Activated T-helper 1 cell treated with anti-CD3 and anti-CD28 coated beads, Interleukin-12 subunit alpha, Interleukin-12 subunit beta, Interleukin-2, Interleukin-4 antibody, amounts not matched to agents 30 ng/mL and 10 ng/mL and 1 ng/mL, durations not matched to agents 14 hours and 24 hours and 36 hours (primary cell): ENCODE measurements at regions of chr19 and their contacts with region 1.

Region 1: DNA sequence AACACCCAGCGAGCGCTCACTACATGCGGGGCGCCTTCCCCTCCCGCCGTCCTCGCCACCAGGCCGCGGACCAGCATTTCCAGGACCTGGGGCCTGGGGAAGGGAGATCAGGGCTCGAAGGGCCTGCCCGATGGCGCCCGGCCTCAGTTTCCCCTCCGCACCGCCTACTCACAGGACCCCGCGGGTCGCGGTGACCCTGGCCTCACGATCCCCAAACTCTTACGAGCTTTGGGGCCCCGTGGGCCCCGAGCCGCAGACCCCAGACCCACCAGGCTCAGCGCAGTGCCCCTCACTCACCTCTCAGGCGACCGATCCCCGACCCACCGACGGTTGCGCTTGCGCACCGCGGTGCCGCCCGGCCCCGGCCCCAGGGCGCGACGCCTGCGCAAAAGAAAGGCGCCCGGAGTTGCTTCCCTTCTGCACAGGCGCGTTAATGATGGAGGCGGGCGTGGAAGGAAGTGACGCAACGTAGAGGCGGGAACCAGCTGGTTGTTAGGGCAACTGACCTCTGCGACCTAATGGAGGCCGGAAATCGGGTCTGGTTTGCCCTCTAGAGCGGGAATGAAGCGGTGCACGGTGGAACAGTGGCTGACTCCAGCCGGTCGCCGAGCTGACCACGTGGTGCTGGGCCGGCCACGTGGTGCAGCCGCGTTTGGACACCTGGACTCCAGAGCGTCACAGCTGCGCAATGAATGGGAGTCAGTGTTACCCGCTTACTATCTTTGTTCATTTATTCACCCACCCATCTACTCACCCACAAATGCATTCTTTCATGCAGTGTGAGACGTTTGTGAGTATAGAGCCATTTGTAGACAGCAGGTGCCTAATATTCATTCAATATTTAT is at the start of gene SGTA:
- DNase-seq: peak; percentile 96
- H3K4me3 Mint-ChIP-seq: peak within 1 kb of the TSS; percentile 98
- H3K27ac Mint-ChIP-seq: peak within 1 kb of the TSS; percentile 89
- H3K4me1 Mint-ChIP-seq: peaks cover 62% of the 10 kb centered on the region
- H3K27me3 Mint-ChIP-seq: no peaks in the 10 kb centered on the region
- total RNA-seq, gene SGTA: 73.4 and 77.8 TPM in 2 replicates

Region 2: DNA sequence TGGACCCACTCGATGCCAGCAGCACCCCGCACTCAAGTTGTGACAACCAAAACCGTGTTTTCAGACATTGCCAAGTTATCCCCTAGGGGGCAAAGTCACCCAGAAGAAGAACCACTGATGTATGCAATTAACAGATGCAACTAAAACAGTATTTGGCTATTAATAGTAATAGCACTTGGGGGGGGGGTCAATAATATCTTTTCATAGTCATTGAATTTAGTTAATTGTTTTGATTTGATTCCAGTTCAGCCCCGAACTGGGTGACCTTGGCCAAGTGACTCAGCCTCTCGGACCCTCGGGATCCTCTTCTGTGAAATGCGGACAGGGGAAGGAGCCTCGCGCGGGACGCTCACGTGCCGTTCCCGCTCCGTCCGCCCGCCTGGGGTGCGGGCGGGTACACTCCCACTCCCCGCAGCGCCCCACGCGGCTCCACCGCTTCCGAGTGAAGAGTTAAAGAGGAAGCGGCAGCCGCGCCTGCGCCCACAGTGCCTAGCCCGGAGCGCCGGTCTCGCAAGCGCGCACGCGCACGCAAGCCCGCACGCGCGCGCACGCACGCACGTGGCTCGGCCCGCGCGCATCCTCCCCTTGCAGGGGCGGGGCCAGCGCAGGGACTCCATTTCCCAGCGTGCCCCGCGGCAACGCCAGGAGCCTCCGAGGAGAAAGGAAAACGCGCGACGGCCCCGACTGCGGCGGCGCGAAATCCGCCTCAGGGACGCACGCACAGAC is 1376.2 kb before region 1 on chr19:
- intact Hi-C with region 1: loop called (anchors 5 kb)
- DNase-seq: peak; percentile 100
- H3K4me3 Mint-ChIP-seq: peak overlapping the region; percentile 76
- H3K27ac Mint-ChIP-seq: peak overlapping the region; percentile 83
- H3K4me1 Mint-ChIP-seq: peaks cover 33% of the 10 kb centered on the region
- H3K27me3 Mint-ChIP-seq: peaks cover 7% of the 10 kb centered on the region

Region 3: GRCh38 chr19:2739602-2740313 is 43.4 kb before region 1 on chr19 and contains the start of gene SLC39A3:
- intact Hi-C with region 1: loop called (anchors 1 kb)
- DNase-seq: peak; percentile 98
- H3K4me3 Mint-ChIP-seq: peak within 1 kb of the TSS; percentile 93
- H3K27ac Mint-ChIP-seq: peak within 1 kb of the TSS; percentile 87
- H3K4me1 Mint-ChIP-seq: peaks cover 9% of the 10 kb centered on the region
- H3K27me3 Mint-ChIP-seq: peaks cover 5% of the 10 kb centered on the region
- total RNA-seq, gene SLC39A3: 50.3 and 51.6 TPM in 2 replicates

Region 4: DNA sequence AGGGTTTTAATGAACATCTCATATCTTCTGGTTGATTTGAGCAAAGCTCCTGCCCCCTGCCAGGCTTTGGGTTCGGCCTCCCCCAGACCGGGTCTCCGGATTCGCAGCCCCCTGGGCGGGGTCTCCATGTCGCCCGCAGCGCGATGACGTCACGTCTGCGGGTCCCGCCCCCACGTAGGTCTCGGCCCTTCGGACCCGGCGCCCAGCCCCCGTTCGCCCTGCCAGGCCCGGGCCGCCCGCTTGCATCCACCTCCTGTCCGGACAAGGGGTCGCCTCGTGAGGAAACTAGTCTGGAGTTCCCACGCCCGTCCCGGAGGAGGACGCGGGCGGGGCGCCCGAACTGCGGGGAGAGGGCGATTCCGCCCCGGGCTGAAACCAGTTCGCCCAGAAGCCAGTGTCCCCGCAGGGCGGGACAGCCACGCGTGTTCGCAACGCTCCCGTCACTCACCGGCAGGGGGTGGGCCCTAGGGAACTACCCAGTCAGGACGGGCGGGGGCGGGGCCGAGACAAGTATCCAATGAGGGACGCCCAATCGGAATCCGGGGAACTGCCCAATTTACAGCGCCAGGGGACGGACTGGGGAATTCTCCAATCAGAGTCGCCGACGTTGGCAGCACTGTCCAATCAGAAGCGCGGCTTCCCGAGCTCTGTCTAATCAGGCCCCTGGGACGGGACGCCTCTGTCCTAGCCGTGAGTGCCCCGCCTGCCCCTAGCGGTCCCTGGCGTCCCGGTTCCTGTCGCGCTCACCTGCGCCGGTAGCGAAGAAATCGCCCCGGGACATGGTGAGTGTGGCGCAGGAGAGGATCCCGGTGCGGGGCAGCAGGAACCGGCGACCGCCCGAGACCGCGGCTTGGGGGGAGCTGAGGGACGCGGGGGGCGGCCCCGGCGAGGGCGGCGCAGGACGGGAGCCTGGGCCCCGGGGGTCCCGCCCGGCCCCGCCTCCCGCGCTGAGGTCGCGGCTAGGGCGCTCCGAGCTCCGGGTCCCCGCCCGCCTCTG is 57.9 kb after region 1 on chr19 and contains the start of gene ZNF555:
- intact Hi-C with region 1: loop called (anchors 1 kb)
- DNase-seq: peak; percentile 84
- H3K4me3 Mint-ChIP-seq: peak within 1 kb of the TSS; percentile 81
- H3K27ac Mint-ChIP-seq: no peak within 1 kb of the TSS
- H3K4me1 Mint-ChIP-seq: no peaks in the 10 kb centered on the region
- H3K27me3 Mint-ChIP-seq: peaks cover 12% of the 10 kb centered on the region
- total RNA-seq, gene ZNF555: 0.37 and 0.65 TPM in 2 replicates

Region 5: GRCh38 chr19:2962045-2962561 is 178.9 kb after region 1 on chr19:
- intact Hi-C with region 1: no loop called
- DNase-seq: peak; percentile 57
- H3K4me3 Mint-ChIP-seq: no peak overlapping the region
- H3K27ac Mint-ChIP-seq: no peak overlapping the region
- H3K4me1 Mint-ChIP-seq: peaks cover 6% of the 10 kb centered on the region
- H3K27me3 Mint-ChIP-seq: no peaks in the 10 kb centered on the region

Region 6: GRCh38 chr19:3185482-3186376 is 402.6 kb after region 1 on chr19 and contains the start of gene NCLN:
- intact Hi-C with region 1: loop called (anchors 10 kb)
- DNase-seq: peak; percentile 91
- H3K4me3 Mint-ChIP-seq: peak within 1 kb of the TSS; percentile 93
- H3K27ac Mint-ChIP-seq: peak within 1 kb of the TSS; percentile 90
- H3K4me1 Mint-ChIP-seq: peaks cover 45% of the 10 kb centered on the region
- H3K27me3 Mint-ChIP-seq: no peaks in the 10 kb centered on the region
- total RNA-seq, gene NCLN: 112 and 118 TPM in 2 replicates